ENCODE measurements at regions of chr9 and their contacts with region 1.

Region 1: GRCh38 chr9:111597817-111598729 is 1.4 kb downstream of the PTGR1 start:
- DNase-seq: no peak
- H3K4me3 ChIP-seq: peak overlapping the region; percentile 73
- H3K27ac ChIP-seq: peak overlapping the region; percentile 88
- H3K27me3 ChIP-seq: no peaks in the 10 kb centered on the region
- CTCF ChIP-seq: peak; percentile 69

Region 2: GRCh38 chr9:111491372-111491771 is 106.7 kb before region 1 on chr9:
- CTCF ChIA-PET with region 1: no interaction called
- POLR2A ChIA-PET with region 1: no interaction called
- DNase-seq: no peak
- H3K4me3 ChIP-seq: no peak overlapping the region
- H3K27ac ChIP-seq: no peak overlapping the region
- H3K27me3 ChIP-seq: no peaks in the 10 kb centered on the region
- CTCF ChIP-seq: no peak

Region 3: DNA sequence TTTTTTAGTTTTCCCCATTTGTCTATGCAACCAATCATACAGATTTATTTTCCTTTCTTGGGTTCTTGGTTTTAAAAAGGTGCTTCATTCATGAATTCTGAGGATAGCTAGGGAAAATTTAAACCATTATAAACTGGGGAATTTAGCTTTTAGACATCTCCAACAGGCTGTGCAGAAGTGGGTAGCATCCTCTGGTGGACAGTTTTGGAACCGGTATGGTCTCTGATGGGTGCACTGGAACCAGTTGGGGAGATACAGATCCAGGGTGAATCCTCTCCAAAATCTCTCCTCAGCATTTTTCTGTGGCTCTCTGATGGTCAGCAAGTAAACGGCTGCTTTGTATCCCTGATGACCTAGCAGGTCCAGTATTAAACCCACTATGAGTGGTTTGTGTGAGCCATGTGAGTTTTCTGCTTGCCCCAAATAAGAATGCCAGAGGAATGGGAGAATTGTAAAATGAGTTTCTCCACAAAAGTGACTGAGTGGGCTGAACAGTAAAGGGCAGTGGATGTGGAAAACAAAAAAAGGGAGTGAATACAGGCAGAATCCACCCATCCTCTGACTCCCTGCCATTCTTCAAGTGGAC is 23.9 kb after region 1 on chr9:
- CTCF ChIA-PET with region 1: interaction called, 24 read pairs
- POLR2A ChIA-PET with region 1: interaction called, 4 read pairs
- DNase-seq: no peak
- H3K4me3 ChIP-seq: no peak overlapping the region
- H3K27ac ChIP-seq: no peak overlapping the region
- H3K27me3 ChIP-seq: no peaks in the 10 kb centered on the region
- CTCF ChIP-seq: peak; percentile 99

Region 4: GRCh38 chr9:111691672-111692329 is 93.7 kb after region 1 on chr9:
- CTCF ChIA-PET with region 1: interaction called, 10 read pairs
- POLR2A ChIA-PET with region 1: no interaction called
- DNase-seq: peak; percentile 4
- H3K4me3 ChIP-seq: no peak overlapping the region
- H3K27ac ChIP-seq: no peak overlapping the region
- H3K27me3 ChIP-seq: no peaks in the 10 kb centered on the region
- CTCF ChIP-seq: peak; percentile 55

Region 5: DNA sequence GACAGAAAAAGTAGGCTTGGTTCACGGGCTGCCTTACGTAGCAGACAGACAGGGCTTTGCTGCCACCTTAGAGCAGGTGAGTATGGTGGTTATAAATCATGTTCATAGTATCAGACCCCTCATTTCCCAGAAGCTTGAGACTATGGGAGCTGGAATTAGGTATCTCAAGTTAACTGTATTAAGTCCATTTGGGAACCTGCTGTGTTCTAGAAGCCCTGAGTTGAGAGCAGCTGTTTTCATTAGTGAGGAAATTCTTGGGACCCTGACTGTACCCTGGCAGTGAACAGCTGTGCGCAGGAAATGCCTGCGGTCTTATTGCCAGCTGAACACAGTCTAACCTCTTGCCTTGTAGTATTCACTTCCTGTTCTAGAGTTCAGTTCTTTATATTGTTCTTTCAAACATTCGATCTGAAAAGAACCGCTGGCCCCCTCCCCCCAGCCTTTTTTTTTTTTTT is 328.4 kb after region 1 on chr9:
- CTCF ChIA-PET with region 1: no interaction called
- POLR2A ChIA-PET with region 1: no interaction called
- DNase-seq: no peak
- H3K4me3 ChIP-seq: no peak overlapping the region
- H3K27ac ChIP-seq: no peak overlapping the region
- H3K27me3 ChIP-seq: no peaks in the 10 kb centered on the region
- CTCF ChIP-seq: no peak

Region 6: DNA sequence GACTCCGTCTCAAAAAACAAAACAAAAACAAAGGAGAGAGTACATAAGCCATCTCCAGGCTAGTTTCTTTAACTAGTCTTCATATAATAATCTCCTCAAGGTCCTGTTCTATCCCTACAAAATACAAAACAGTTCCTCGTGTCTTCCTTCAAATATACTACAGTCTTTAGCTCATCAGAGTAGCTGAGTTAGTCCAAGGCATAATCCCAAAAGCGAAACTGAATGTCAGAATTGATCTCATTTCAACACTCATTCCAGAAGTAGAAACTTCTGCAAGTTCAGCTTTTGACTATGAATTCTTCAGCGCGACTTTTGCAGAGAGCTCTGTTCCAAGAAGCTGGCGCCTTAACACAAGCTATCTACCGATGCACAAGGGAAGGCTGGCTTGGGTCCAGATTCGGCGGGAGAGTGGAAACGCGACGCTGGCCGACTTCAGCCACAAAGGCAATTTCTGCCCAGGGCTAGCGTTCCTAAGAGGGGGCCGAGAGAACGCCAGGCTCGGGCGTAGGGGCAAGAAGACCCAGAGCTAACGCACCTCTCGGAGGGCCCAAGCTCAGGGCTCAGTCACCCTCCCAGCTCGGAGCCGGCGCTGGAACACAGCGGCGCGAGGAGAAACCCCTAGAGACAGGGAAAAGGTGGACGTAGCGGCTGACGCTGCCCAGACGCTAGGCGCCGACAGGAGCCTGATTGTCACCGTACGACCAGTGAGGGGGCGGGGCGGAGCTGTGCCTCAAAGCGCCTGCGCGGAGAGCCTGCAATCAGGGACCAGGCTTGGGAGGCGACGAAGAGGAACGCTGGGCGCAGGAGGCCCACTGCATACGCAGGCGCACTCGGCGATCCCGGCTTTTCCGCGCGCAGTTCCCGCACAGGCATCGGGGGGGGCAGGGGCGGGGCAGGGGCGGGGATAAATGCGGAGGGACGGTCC is 781.4 kb after region 1 on chr9:
- CTCF ChIA-PET with region 1: interaction called, 11 read pairs
- POLR2A ChIA-PET with region 1: no interaction called
- DNase-seq: peak; percentile 95
- H3K4me3 ChIP-seq: peak overlapping the region; percentile 91
- H3K27ac ChIP-seq: peak overlapping the region; percentile 97
- H3K27me3 ChIP-seq: no peaks in the 10 kb centered on the region
- CTCF ChIP-seq: no peak

Measured in AG04450 (cell line).